HAP-1 (cell line): ENCODE measurements at regions of chr7 and their contacts with region 1.

Region 1: GRCh38 chr7:95476904-95477594 is 8.7 kb upstream of the ASB4 start:
- DNase-seq: peak; percentile 71 to 74
- H3K4me3 ChIP-seq: no peak overlapping the region
- H3K4me1 ChIP-seq: peaks cover 25% of the 10 kb centered on the region
- H3K27me3 ChIP-seq: no peaks in the 10 kb centered on the region

Region 2: DNA sequence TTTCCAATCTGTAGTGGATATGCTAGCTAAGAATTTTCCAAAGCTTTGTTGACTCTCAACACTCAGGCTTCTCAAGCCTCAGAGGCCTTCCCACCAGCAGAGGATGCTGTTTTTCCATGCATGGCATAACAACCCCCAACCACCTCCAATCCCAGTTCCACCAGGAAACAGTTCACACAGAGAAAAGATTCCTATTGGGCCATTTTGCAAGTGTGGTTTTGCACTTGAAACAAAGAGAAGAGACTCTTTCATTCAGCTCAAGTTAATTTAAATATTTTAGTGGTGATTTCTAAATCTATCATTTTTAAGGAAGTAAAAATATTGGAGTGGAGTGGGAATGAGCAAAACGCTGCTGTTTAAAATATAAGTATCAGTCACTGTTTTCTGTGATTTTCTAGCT is 1188.0 kb before region 1 on chr7:
- in situ Hi-C with region 1: loop called (anchors 25 kb)
- DNase-seq: peak; percentile 76
- H3K4me3 ChIP-seq: no peak overlapping the region
- H3K4me1 ChIP-seq: peaks cover 9% of the 10 kb centered on the region
- H3K27me3 ChIP-seq: peaks cover 12% of the 10 kb centered on the region

Region 3: GRCh38 chr7:94436018-94436604 is 1040.9 kb before region 1 on chr7:
- in situ Hi-C with region 1: loop called (anchors 25 kb)
- DNase-seq: peak; percentile 49 to 83
- H3K4me3 ChIP-seq: no peak overlapping the region
- H3K4me1 ChIP-seq: peaks cover 11% of the 10 kb centered on the region
- H3K27me3 ChIP-seq: no peaks in the 10 kb centered on the region